Vagina (tissue), 2 donors: ENCODE measurements at regions of chr2 and their contacts with region 1.

Region 1: GRCh38 chr2:74874851-74875321 is 41.0 kb downstream of the HK2 start:
- DNase-seq: no peak
- H3K4me3 ChIP-seq: no peak overlapping the region
- H3K27ac ChIP-seq: peak overlapping the region; percentile 70
- H3K4me1 ChIP-seq: no peaks in the 10 kb centered on the region
- H3K27me3 ChIP-seq: no peaks in the 10 kb centered on the region
- CTCF ChIP-seq: no peak
- POLR2A ChIP-seq: no peak

Region 2: GRCh38 chr2:74690571-74690970 is 184.3 kb before region 1 on chr2:
- intact Hi-C with region 1: no loop called
- DNase-seq: no peak
- H3K4me3 ChIP-seq: no peak overlapping the region
- H3K27ac ChIP-seq: no peak overlapping the region
- H3K4me1 ChIP-seq: no peaks in the 10 kb centered on the region
- H3K27me3 ChIP-seq: no peaks in the 10 kb centered on the region
- CTCF ChIP-seq: peak; percentile 8 to 38 (median 37)
- POLR2A ChIP-seq: no peak

Region 3: DNA sequence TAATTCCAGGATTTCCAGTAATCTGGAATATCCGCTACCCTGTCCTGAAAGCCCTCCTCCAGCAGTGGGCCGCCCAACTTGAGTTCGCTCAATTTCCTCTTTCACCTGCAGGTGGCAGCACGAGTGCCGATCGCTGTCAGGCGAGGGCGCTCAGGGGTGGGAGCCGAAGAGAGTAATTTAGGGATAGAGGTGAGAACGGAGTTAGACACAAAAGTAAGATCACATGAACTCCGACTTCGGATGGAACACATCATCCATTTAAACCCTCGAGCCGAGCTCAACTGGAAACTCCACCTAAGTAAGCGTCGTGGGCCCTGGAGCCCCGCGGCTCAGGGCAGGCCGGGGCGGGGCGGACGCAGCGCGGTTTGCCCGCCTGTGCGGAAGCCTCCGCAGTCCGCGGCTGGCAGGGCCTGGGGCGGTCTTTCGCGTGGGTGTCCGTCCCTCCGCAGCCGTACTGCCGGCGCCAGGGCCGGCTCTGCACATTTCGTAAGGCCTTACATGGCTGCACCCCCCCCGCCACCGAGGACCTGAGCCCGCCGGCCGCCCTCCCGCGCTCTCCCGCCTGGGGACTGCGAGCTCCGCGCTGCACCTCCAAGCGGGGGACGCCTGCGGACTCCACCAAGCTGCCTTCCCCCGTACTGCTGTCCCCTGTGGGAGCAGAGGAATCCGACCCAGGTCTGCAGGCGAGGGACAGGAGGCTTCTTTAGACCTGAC is 159.7 kb before region 1 on chr2:
- intact Hi-C with region 1: loop called (anchors 2 kb)
- DNase-seq: no peak
- H3K4me3 ChIP-seq: peak overlapping the region; percentile 51 to 58
- H3K27ac ChIP-seq: peak overlapping the region; percentile 69
- H3K4me1 ChIP-seq: peaks cover 6% of the 10 kb centered on the region
- H3K27me3 ChIP-seq: no peaks in the 10 kb centered on the region
- CTCF ChIP-seq: peak; percentile 72 to 87 (median 78)
- POLR2A ChIP-seq: no peak

Region 4: GRCh38 chr2:74958274-74959105 is 83.6 kb after region 1 on chr2 and contains the start of gene POLE4:
- intact Hi-C with region 1: no loop called
- DNase-seq: peak in 1 of 2 donors; percentile 93
- H3K4me3 ChIP-seq: peak within 1 kb of the TSS; percentile 58 to 63
- H3K27ac ChIP-seq: peak within 1 kb of the TSS; percentile 88
- H3K4me1 ChIP-seq: peaks cover 5% of the 10 kb centered on the region
- H3K27me3 ChIP-seq: no peaks in the 10 kb centered on the region
- CTCF ChIP-seq: peak in 1 of 3 experiments; percentile 22
- POLR2A ChIP-seq: peak in 1 of 2 donors; percentile 82
- total RNA-seq, gene POLE4: 21.6 TPM